PC-9 (cell line): ENCODE measurements at regions of chr2 and their contacts with region 1.

Region 1: GRCh38 chr2:225100856-225101294 is 58.6 kb upstream of the DOCK10 start:
- DNase-seq: peak; percentile 51 to 83
- H3K4me3 ChIP-seq: no peak overlapping the region
- H3K27ac ChIP-seq: peak overlapping the region; percentile 82
- H3K4me1 ChIP-seq: peaks cover 40% of the 10 kb centered on the region
- H3K27me3 ChIP-seq: no peaks in the 10 kb centered on the region
- CTCF ChIP-seq: no peak

Region 2: GRCh38 chr2:224678634-224679263 is 422.1 kb before region 1 on chr2:
- CTCF ChIA-PET with region 1: no interaction called
- POLR2A ChIA-PET with region 1: no interaction called
- intact Hi-C with region 1: loop called (anchors 5 kb)
- DNase-seq: peak; percentile 52 to 90
- H3K4me3 ChIP-seq: peak overlapping the region; percentile 33; the same call in 1 of the 2 replicates
- H3K27ac ChIP-seq: peak overlapping the region; percentile 92
- H3K4me1 ChIP-seq: peaks cover 26% of the 10 kb centered on the region
- H3K27me3 ChIP-seq: no peaks in the 10 kb centered on the region
- CTCF ChIP-seq: no peak

Region 3: DNA sequence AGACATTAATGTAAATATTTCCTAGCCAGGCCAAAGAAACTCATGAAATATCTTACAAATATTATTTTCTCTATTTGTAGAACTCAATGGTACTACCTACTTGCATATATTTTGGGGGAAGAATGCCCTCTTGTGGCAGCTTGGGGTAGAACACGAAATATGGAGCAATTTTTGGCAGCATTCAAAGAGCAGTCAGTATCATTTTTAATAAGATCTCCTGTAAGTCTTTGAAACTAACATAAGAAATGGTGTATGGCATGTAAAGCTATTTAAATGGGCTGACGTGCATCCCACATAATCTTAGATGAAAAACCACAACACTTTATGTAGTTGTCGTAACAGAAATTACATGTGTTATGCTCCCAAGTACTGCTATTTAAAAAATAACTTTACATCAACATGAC is 322.4 kb before region 1 on chr2:
- CTCF ChIA-PET with region 1: no interaction called
- POLR2A ChIA-PET with region 1: no interaction called
- intact Hi-C with region 1: no loop called
- DNase-seq: peak; percentile 67 to 75
- H3K4me3 ChIP-seq: no peak overlapping the region
- H3K27ac ChIP-seq: no peak overlapping the region
- H3K4me1 ChIP-seq: peaks cover 2% of the 10 kb centered on the region
- H3K27me3 ChIP-seq: no peaks in the 10 kb centered on the region
- CTCF ChIP-seq: peak; percentile 99

Region 4: DNA sequence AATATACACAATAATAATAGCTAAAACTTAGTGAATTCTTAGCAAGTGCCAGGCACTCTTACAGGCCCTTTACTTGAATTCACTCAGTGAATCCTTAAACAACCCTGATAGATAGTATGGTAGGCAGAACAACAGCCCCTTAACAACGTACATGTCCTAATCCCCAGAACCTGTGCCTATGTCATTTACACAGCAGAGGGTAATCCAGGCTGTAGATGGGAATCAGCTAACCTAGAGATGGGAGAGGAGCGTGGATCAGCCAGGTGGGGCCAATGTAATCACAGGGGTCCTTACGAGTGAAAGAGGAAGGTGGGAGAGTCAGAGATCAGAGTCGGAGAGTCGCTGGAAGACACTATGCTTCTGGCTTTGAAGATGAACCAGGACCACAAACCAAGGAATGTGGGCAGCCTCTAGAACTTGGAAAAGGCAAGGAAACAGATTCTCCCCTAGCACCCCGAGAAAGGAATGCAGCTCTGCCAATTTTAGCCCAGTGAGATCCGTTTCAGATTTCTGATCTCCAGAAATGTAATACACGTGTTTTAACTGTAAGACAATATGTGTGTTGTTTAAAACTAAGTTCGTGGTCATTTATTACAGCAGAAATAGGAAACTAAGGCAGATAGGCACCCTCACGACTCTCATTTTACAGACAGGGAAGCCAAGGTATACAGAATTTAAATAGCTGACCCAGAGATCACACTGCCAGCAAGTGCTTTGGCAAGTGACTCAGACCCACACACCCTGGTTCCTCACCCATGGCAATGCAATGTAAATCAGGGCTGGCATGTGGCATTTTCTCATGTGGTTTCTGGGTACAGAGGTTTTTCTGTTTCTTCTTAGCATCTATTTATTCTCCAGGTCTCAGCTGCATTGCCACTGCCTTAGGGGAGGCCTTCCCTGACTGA is 127.5 kb before region 1 on chr2:
- CTCF ChIA-PET with region 1: no interaction called
- POLR2A ChIA-PET with region 1: no interaction called
- intact Hi-C with region 1: loop called (anchors 5 kb)
- DNase-seq: peak in 1 of 2 experiments; percentile 73
- H3K4me3 ChIP-seq: no peak overlapping the region
- H3K27ac ChIP-seq: no peak overlapping the region
- H3K4me1 ChIP-seq: peaks cover 31% of the 10 kb centered on the region
- H3K27me3 ChIP-seq: no peaks in the 10 kb centered on the region
- CTCF ChIP-seq: no peak

Region 5: GRCh38 chr2:225010804-225011203 is 90.1 kb before region 1 on chr2:
- CTCF ChIA-PET with region 1: no interaction called
- POLR2A ChIA-PET with region 1: no interaction called
- intact Hi-C with region 1: loop called (anchors 5 kb)
- DNase-seq: peak in 1 of 2 experiments; percentile 59
- H3K4me3 ChIP-seq: 0 out of 2 replicates have a peak overlapping the region, but pooled peaks have one; percentile 0
- H3K27ac ChIP-seq: peak overlapping the region; percentile 26
- H3K4me1 ChIP-seq: peaks cover 14% of the 10 kb centered on the region
- H3K27me3 ChIP-seq: no peaks in the 10 kb centered on the region
- CTCF ChIP-seq: no peak

Region 6: GRCh38 chr2:225041851-225042799 is 58.8 kb before region 1 on chr2 and contains the start of gene DOCK10:
- CTCF ChIA-PET with region 1: no interaction called
- POLR2A ChIA-PET with region 1: no interaction called
- intact Hi-C with region 1: loop called (anchors 5 kb)
- DNase-seq: peak in 1 of 2 experiments; percentile 57
- H3K4me3 ChIP-seq: peak within 1 kb of the TSS; percentile 53; the same call in 1 of the 2 replicates
- H3K27ac ChIP-seq: no peak within 1 kb of the TSS
- H3K4me1 ChIP-seq: no peaks in the 10 kb centered on the region
- H3K27me3 ChIP-seq: peaks cover 64% of the 10 kb centered on the region
- CTCF ChIP-seq: no peak
- total RNA-seq, gene DOCK10: 28.9 and 33.6 TPM in 2 replicates

Region 7: DNA sequence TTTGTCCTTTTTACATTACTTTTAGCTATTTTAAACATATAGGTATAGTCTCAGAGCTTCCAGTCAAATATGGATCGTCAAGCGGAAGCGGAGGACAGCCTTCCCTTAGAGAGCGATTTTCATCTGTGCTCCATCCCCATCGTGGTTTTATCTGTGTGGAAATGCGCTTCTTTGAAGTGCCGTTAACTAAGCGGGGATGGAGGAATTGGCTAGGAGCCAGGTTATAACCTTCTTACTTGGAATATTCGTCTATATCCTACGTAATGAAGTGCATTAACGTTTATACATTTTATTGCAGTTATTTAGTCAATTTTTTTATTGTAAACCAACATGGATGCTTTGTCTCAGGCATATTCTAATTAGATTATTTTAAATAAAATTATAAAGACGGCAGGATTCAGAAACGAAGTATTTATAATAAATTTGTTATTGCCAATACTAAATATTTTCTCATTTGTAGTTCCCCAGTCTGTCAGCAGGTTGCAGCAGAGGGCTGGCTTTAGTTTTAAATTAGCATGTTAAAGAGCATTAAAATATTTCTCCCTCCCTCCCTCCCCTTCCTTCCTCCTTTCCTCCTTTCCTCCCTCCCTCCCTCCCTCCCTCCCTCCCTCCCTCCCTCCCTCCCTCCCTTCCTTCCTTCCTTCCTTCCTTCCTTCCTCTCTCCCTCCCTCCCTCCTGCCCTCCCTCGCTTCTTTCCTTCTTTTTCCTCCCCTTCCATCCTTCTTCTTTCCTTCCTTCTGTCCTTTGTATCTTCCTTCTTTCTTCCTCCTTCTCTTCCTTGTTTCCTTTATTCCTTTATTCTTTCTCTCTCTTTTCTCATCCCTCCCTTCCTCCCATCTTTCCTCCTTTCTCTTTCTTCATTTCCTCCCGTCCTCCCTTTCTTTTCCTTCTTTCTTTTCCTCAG is 22.0 kb after region 1 on chr2:
- CTCF ChIA-PET with region 1: interaction called, 8 read pairs
- POLR2A ChIA-PET with region 1: interaction called, 3 read pairs
- intact Hi-C with region 1: loop called (anchors 1 kb)
- DNase-seq: peak in 1 of 2 experiments; percentile 24
- H3K4me3 ChIP-seq: no peak overlapping the region
- H3K27ac ChIP-seq: no peak overlapping the region
- H3K4me1 ChIP-seq: peaks cover 15% of the 10 kb centered on the region
- H3K27me3 ChIP-seq: no peaks in the 10 kb centered on the region
- CTCF ChIP-seq: peak; percentile 78

Region 8: GRCh38 chr2:225182126-225182525 is 81.3 kb after region 1 on chr2:
- CTCF ChIA-PET with region 1: no interaction called
- POLR2A ChIA-PET with region 1: no interaction called
- intact Hi-C with region 1: no loop called
- DNase-seq: no peak
- H3K4me3 ChIP-seq: no peak overlapping the region
- H3K27ac ChIP-seq: no peak overlapping the region
- H3K4me1 ChIP-seq: no peaks in the 10 kb centered on the region
- H3K27me3 ChIP-seq: no peaks in the 10 kb centered on the region
- CTCF ChIP-seq: no peak

Region 9: GRCh38 chr2:225464346-225465025 is 363.6 kb after region 1 on chr2:
- CTCF ChIA-PET with region 1: no interaction called
- POLR2A ChIA-PET with region 1: no interaction called
- intact Hi-C with region 1: loop called (anchors 1 kb)
- DNase-seq: no peak
- H3K4me3 ChIP-seq: peak overlapping the region; percentile 26; the same call in 1 of the 2 replicates
- H3K27ac ChIP-seq: no peak overlapping the region
- H3K4me1 ChIP-seq: 0 out of 2 replicates have a peak, but pooled peaks cover 7% of the 10 kb centered on the region
- H3K27me3 ChIP-seq: no peaks in the 10 kb centered on the region
- CTCF ChIP-seq: no peak

Region 10: DNA sequence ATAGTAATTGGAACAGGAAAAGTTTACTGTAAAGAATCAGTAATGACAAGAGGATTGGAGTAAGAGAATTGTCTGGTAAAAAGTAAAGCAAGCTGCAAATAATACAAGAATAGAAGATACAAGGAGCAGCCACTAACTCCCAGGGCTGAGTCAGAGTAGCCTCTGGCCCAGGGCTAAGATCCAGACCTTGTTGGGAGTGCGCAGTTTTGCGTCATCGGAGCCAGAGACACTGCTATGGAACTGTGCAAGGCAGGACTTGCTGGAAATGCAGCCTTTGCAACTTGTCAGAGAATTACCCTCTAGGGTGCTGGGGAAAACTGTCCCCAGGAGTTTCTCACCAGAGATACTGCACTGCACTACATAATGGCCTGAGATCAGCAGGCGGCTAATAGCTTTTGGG is 433.8 kb after region 1 on chr2:
- CTCF ChIA-PET with region 1: no interaction called
- POLR2A ChIA-PET with region 1: no interaction called
- intact Hi-C with region 1: no loop called
- DNase-seq: no peak
- H3K4me3 ChIP-seq: no peak overlapping the region
- H3K27ac ChIP-seq: no peak overlapping the region
- H3K4me1 ChIP-seq: no peaks in the 10 kb centered on the region
- H3K27me3 ChIP-seq: no peaks in the 10 kb centered on the region; the same call in 1 of the 2 replicates
- CTCF ChIP-seq: no peak